ENCODE measurements at regions of chr9 and their contacts with region 1.

Region 1: GRCh38 chr9:97632985-97633858 is at the starts of genes NCBP1 and TSTD2:
- DNase-seq: peak; percentile 89 to 97 (median 96)
- ATAC-seq: peak; percentile 91
- H3K4me3 ChIP-seq: peak within 1 kb of the TSS; percentile 78
- H3K4me3 Mint-ChIP-seq: peak within 1 kb of the TSS; percentile 86 to 100 (median 96)
- H3K27ac ChIP-seq: peak within 1 kb of the TSS; percentile 88
- H3K27ac Mint-ChIP-seq: peak within 1 kb of the TSS; percentile 98 to 100 (median 99)
- H3K4me1 ChIP-seq: peaks cover 37 to 43% of the 10 kb centered on the region in 2 donors
- H3K4me1 Mint-ChIP-seq: peaks cover 41 to 82% (median 65%) of the 10 kb centered on the region in 7 donors
- H3K27me3 ChIP-seq: no peaks in the 10 kb centered on the region
- H3K27me3 Mint-ChIP-seq: no peaks in the 10 kb centered on the region
- total RNA-seq, gene NCBP1: 33.8 to 42.2 (median 40.6) TPM
- total RNA-seq, gene TSTD2: 15.2 to 23.3 (median 18.6) TPM

Region 2: GRCh38 chr9:96566498-96567207 is 1066.6 kb before region 1 on chr9:
- CTCF ChIA-PET with region 1: no interaction called
- POLR2A ChIA-PET with region 1: no interaction called
- intact Hi-C with region 1: loop called in 1 of 2 experiments (anchors 1 kb)
- DNase-seq: peak; percentile 64 to 81 (median 78)
- ATAC-seq: peak; percentile 92
- H3K4me3 ChIP-seq: peak overlapping the region; percentile 77
- H3K4me3 Mint-ChIP-seq: peak overlapping the region; percentile 83 to 95 (median 89)
- H3K27ac ChIP-seq: peak overlapping the region; percentile 89
- H3K27ac Mint-ChIP-seq: peak overlapping the region; percentile 52 to 91 (median 84)
- H3K4me1 ChIP-seq: peaks cover 8 to 16% of the 10 kb centered on the region in 2 donors
- H3K4me1 Mint-ChIP-seq: peaks cover 6 to 31% (median 29%) of the 10 kb centered on the region in 7 donors
- H3K27me3 ChIP-seq: no peaks in the 10 kb centered on the region
- H3K27me3 Mint-ChIP-seq: peaks cover 0 to 36% (median 3%) of the 10 kb centered on the region in 5 donors

Region 3: GRCh38 chr9:97237951-97238851 is 395.0 kb before region 1 on chr9:
- CTCF ChIA-PET with region 1: no interaction called
- POLR2A ChIA-PET with region 1: interaction called, 8 read pairs
- intact Hi-C with region 1: loop called in 1 of 2 experiments (anchors 2 kb)
- DNase-seq: peak; percentile 48 to 82 (median 70)
- ATAC-seq: peak; percentile 94
- H3K4me3 ChIP-seq: peak overlapping the region; percentile 71
- H3K4me3 Mint-ChIP-seq: peak overlapping the region; percentile 87 to 98 (median 95)
- H3K27ac ChIP-seq: peak overlapping the region; percentile 63
- H3K27ac Mint-ChIP-seq: peak overlapping the region; percentile 84 to 94 (median 90)
- H3K4me1 ChIP-seq: peaks cover 0 to 5% of the 10 kb centered on the region in 2 donors
- H3K4me1 Mint-ChIP-seq: peaks cover 11 to 38% (median 24%) of the 10 kb centered on the region in 7 donors
- H3K27me3 ChIP-seq: no peaks in the 10 kb centered on the region
- H3K27me3 Mint-ChIP-seq: peaks cover 0 to 5% (median 0%) of the 10 kb centered on the region in 5 donors

Region 4: GRCh38 chr9:97591535-97591934 is 41.7 kb before region 1 on chr9:
- CTCF ChIA-PET with region 1: no interaction called
- POLR2A ChIA-PET with region 1: no interaction called
- intact Hi-C with region 1: no loop called
- DNase-seq: no peak
- ATAC-seq: no peak
- H3K4me3 ChIP-seq: no peak overlapping the region
- H3K4me3 Mint-ChIP-seq: no peak overlapping the region
- H3K27ac ChIP-seq: no peak overlapping the region
- H3K27ac Mint-ChIP-seq: no peak overlapping the region
- H3K4me1 ChIP-seq: no peaks in the 10 kb centered on the region
- H3K4me1 Mint-ChIP-seq: peaks cover 0 to 2% (median 0%) of the 10 kb centered on the region in 7 donors
- H3K27me3 ChIP-seq: no peaks in the 10 kb centered on the region
- H3K27me3 Mint-ChIP-seq: peaks cover 0 to 8% (median 5%) of the 10 kb centered on the region in 5 donors

Region 5: GRCh38 chr9:97651646-97652045 is 18.4 kb after region 1 on chr9:
- CTCF ChIA-PET with region 1: interaction called, 3 read pairs
- POLR2A ChIA-PET with region 1: interaction called, 16 read pairs
- intact Hi-C with region 1: loop called in 1 of 2 experiments (anchors 2 kb)
- DNase-seq: no peak
- ATAC-seq: no peak
- H3K4me3 ChIP-seq: no peak overlapping the region
- H3K4me3 Mint-ChIP-seq: no peak overlapping the region
- H3K27ac ChIP-seq: no peak overlapping the region
- H3K27ac Mint-ChIP-seq: peak overlapping the region in 1 of 9 donors; percentile 28
- H3K4me1 ChIP-seq: no peaks in the 10 kb centered on the region
- H3K4me1 Mint-ChIP-seq: peaks cover 0 to 18% (median 3%) of the 10 kb centered on the region in 7 donors
- H3K27me3 ChIP-seq: no peaks in the 10 kb centered on the region
- H3K27me3 Mint-ChIP-seq: no peaks in the 10 kb centered on the region

Region 6: DNA sequence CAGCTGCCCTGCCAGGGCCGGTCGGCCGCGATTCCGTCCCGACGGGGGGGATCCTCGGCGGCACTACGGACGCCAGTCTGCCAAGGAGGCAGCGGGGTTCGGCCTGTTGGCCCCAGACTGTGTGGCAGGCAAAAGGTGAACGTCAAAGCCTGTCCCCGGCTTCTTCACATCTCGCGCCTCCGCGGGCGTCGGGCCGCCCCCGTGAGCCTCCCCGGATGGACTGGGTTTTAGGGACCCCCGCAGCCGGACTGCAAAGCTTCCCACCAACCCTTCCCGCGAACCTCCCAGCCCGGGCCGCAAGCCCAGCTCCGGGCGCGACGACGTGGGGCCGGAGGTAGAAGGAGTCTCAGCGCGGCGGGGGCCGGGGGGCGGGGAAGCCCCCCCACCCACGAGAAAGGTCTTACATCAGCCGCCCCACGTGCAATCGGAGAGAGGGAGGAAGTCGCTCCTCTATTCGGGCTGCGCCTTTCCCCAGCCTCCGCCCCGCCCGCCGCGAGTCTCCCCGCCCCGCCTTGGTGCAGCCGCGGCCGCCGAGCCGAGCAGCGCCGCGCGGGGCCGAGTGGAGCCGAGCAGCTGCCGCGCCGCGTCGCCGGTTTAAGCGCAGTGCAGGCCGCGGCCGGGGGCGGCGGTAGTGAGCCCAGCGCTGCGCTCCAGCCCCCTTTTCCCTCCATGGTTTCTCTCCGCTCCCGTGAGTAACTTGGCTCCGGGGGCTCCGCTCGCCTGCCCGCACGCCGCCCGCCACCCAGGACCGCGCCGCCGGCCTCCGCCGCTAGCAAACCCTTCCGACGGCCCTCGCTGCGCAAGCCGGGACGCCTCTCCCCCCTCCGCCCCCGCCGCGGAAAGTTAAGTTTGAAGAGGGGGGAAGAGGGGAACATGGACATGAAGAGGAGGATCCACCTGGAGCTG is 349.7 kb after region 1 on chr9 and contains the start of gene ANP32B:
- CTCF ChIA-PET with region 1: no interaction called
- POLR2A ChIA-PET with region 1: no interaction called
- intact Hi-C with region 1: loop called in 1 of 2 experiments (anchors 2 kb)
- DNase-seq: peak; percentile 94 to 97 (median 96)
- ATAC-seq: peak; percentile 90
- H3K4me3 ChIP-seq: peak within 1 kb of the TSS; percentile 85
- H3K4me3 Mint-ChIP-seq: peak within 1 kb of the TSS; percentile 79 to 92 (median 86)
- H3K27ac ChIP-seq: peak within 1 kb of the TSS; percentile 98
- H3K27ac Mint-ChIP-seq: peak within 1 kb of the TSS; percentile 25 to 94 (median 85)
- H3K4me1 ChIP-seq: peaks cover 30 to 51% of the 10 kb centered on the region in 2 donors
- H3K4me1 Mint-ChIP-seq: peaks cover 48 to 70% (median 63%) of the 10 kb centered on the region in 7 donors
- H3K27me3 ChIP-seq: no peaks in the 10 kb centered on the region
- H3K27me3 Mint-ChIP-seq: no peaks in the 10 kb centered on the region
- total RNA-seq, gene ANP32B: 143 to 267 (median 186) TPM

Region 7: DNA sequence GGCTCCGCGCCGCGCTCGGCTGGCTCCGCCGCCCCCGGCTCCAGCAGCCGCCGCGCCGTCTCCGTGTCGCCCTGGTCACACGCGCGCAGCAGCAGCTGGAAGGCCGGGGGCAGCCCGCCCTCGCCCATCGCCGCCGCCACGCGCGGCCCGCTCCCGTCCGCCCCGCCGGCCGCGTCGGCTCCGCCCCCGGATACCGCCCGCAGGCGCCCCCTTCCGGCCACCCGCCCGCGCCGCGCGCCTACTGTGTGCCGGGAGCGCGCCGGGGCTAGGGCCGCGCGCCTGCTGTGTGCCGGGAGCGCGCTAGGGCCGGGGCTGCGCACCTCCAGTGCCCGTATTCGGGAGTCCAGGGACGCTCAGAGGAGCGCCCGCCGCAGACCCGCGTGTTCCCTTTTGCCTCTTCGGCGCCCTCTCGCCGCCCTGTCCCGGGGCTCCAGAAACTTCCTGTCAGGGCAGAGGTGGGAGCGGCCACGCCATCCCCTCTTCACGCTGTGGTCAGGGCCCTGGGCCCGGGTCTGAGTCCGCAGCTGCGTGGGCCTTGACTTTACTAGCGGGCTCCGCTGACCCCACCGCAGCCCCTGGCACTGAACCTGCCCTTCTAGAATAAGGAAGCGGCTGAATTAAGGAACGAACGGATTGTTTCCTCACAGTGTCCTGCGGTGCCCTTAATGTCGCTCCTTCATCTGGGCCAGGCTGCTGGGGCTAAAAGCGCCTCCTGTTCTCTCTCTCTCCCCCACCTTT is 1163.3 kb after region 1 on chr9 and contains the start of gene ANKS6:
- CTCF ChIA-PET with region 1: no interaction called
- POLR2A ChIA-PET with region 1: no interaction called
- intact Hi-C with region 1: loop called in 1 of 2 experiments (anchors 5 kb)
- DNase-seq: peak; percentile 67 to 95 (median 84)
- ATAC-seq: peak; percentile 98
- H3K4me3 ChIP-seq: peak within 1 kb of the TSS; percentile 87
- H3K4me3 Mint-ChIP-seq: peak within 1 kb of the TSS; percentile 87 to 94 (median 90)
- H3K27ac ChIP-seq: peak within 1 kb of the TSS; percentile 74
- H3K27ac Mint-ChIP-seq: peak within 1 kb of the TSS; percentile 63 to 90 (median 87)
- H3K4me1 ChIP-seq: peaks cover 6 to 12% of the 10 kb centered on the region in 2 donors
- H3K4me1 Mint-ChIP-seq: peaks cover 21 to 37% (median 32%) of the 10 kb centered on the region in 7 donors
- H3K27me3 ChIP-seq: no peaks in the 10 kb centered on the region
- H3K27me3 Mint-ChIP-seq: peaks cover 0 to 23% (median 0%) of the 10 kb centered on the region in 5 donors
- total RNA-seq, gene ANKS6: 8.1 to 18.4 (median 13.5) TPM